ENCODE measurements at regions of chr2 and their contacts with region 1.

Region 1: GRCh38 chr2:13006829-13007717 is 290.3 kb downstream of the TRIB2 start:
- DNase-seq: peak; percentile 40 to 80 (median 56)
- ATAC-seq: peak; percentile 59
- H3K4me3 ChIP-seq: no peak overlapping the region
- H3K4me3 Mint-ChIP-seq: no peak overlapping the region
- H3K27ac ChIP-seq: no peak overlapping the region
- H3K27ac Mint-ChIP-seq: no peak overlapping the region
- H3K4me1 ChIP-seq: no peaks in the 10 kb centered on the region
- H3K4me1 Mint-ChIP-seq: peaks cover 5% of the 10 kb centered on the region
- H3K27me3 ChIP-seq: peaks cover 0 to 4% of the 10 kb centered on the region in 2 experiments
- H3K27me3 Mint-ChIP-seq: peaks cover 6% of the 10 kb centered on the region
- CTCF ChIP-seq: peak; percentile 96

Region 2: DNA sequence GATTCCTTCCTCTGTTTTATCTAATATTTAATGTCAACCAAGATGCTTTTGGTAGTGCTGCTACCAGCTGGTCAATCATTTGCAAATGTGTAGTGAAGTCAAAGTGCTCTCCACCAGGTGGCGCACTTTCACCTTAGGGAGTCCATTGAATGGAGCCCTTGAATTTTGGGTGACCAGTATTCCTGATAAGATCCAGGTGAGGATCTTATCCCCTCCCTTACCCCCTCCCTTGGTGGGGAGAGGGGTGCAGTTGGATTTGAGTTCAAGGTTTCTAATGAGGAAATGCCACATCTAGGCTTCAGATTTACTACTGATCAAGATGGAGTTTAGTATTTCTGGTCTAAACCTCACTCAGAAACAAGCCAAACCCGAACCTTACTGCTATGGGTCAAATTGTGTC is 1529.1 kb before region 1 on chr2:
- CTCF ChIA-PET with region 1: no interaction called
- POLR2A ChIA-PET with region 1: no interaction called
- intact Hi-C with region 1: loop called (anchors 1 to 2 kb)
- DNase-seq: peak; percentile 67 to 87 (median 75)
- ATAC-seq: peak; percentile 59
- H3K4me3 ChIP-seq: no peak overlapping the region
- H3K4me3 Mint-ChIP-seq: no peak overlapping the region
- H3K27ac ChIP-seq: no peak overlapping the region
- H3K27ac Mint-ChIP-seq: no peak overlapping the region
- H3K4me1 ChIP-seq: peaks cover 9% of the 10 kb centered on the region
- H3K4me1 Mint-ChIP-seq: peaks cover under 1% of the 10 kb centered on the region
- H3K27me3 ChIP-seq: peaks cover 22 to 28% of the 10 kb centered on the region in 2 experiments
- H3K27me3 Mint-ChIP-seq: peaks cover 28% of the 10 kb centered on the region
- CTCF ChIP-seq: peak; percentile 97

Region 3: DNA sequence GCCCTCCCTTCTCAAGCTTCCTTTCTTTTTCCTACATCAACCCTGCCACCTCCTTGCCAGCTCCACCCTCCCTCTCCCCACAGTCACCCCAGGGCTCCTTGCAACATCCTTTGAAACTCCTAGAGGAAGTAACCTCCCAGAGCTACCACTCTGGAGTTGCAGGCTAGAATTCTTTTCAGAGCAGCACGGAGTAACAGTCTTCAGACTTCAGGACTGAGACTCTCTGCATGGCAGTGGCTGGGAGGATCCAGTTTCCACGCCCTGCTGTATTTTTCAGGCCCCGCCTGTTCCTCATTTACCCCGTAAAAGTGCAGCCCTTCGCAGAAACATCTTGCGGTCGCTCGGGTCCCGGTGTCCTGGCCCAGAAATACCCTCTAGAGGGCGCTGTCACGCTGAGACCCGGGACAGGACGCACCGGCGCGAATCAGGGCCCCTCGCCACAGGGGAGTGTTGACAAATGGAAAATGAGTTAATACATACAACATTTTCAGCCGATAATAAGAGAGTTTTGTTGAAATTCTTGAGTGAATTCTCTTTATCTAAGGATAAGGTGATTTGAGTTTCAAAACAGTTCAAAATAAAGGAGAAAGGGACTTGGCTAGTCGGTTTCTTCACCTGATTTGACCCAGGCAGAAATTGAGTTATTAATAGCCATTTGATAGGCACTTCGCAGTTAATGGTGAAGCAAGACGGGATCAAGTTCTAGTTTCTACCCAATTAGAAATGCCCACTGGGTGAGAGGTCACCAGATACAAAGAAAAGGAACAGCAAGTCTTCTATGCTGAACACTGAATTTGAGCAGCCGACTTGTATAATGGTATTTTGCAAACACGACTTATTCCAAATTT is 1318.6 kb before region 1 on chr2:
- CTCF ChIA-PET with region 1: interaction called, 6 read pairs
- POLR2A ChIA-PET with region 1: no interaction called
- intact Hi-C with region 1: loop called (anchors 2 to 5 kb)
- DNase-seq: peak; percentile 68 to 89 (median 76)
- ATAC-seq: peak; percentile 91
- H3K4me3 ChIP-seq: peak overlapping the region; percentile 1
- H3K4me3 Mint-ChIP-seq: no peak overlapping the region
- H3K27ac ChIP-seq: no peak overlapping the region
- H3K27ac Mint-ChIP-seq: no peak overlapping the region
- H3K4me1 ChIP-seq: peaks cover 10% of the 10 kb centered on the region
- H3K4me1 Mint-ChIP-seq: peaks cover 8% of the 10 kb centered on the region
- H3K27me3 ChIP-seq: no peaks in the 10 kb centered on the region
- H3K27me3 Mint-ChIP-seq: peaks cover 18% of the 10 kb centered on the region
- CTCF ChIP-seq: peak; percentile 85

Region 4: DNA sequence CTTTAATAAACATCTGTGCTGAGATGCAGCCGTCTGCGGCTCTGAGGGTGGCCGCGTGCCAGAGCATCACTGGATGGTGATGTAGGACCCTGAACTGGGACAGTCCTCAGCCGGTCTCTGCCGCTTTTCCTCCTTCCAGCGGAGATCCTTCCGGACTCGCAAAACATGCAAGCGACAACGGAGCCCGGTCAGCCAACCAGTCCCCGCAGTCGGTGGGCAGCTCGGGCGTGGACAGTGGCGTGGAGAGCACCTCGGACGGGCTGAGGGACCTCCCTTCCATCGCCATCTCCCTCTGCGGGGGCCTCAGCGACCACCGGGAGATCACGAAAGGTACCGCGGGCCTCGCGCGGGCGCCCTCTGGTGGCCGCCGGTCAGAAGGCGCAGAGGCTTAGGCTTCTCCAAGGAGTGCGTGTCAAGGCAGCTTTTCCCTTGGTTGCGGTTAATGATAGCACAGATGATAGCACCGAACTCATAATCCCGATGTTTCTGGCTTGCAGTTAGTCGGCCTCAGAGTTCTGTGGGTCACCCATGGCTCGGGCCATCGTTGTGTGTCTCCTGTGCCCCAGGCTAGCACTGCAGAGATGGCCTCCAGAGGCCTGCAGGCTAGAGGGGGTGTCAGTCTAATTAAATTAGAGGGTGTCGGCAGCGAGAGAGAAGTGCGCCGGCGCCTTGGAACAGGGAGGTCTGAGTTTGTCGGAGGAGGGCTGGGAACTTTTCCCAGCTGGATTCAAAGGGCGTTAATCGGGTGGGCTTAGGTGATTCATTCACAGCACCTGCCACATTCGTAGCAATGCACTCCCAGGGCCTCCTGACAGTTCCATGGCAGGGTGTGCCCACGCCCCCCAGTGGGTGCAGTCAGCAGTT is 1222.1 kb before region 1 on chr2:
- CTCF ChIA-PET with region 1: no interaction called
- POLR2A ChIA-PET with region 1: no interaction called
- intact Hi-C with region 1: loop called in 1 of 2 experiments (anchors 2 kb)
- DNase-seq: peak; percentile 14 to 69 (median 35)
- ATAC-seq: peak; percentile 55
- H3K4me3 ChIP-seq: no peak overlapping the region
- H3K4me3 Mint-ChIP-seq: no peak overlapping the region
- H3K27ac ChIP-seq: no peak overlapping the region
- H3K27ac Mint-ChIP-seq: no peak overlapping the region
- H3K4me1 ChIP-seq: peaks cover 2% of the 10 kb centered on the region
- H3K4me1 Mint-ChIP-seq: no peaks in the 10 kb centered on the region
- H3K27me3 ChIP-seq: no peaks in the 10 kb centered on the region
- H3K27me3 Mint-ChIP-seq: no peaks in the 10 kb centered on the region
- CTCF ChIP-seq: peak; percentile 94

Region 5: DNA sequence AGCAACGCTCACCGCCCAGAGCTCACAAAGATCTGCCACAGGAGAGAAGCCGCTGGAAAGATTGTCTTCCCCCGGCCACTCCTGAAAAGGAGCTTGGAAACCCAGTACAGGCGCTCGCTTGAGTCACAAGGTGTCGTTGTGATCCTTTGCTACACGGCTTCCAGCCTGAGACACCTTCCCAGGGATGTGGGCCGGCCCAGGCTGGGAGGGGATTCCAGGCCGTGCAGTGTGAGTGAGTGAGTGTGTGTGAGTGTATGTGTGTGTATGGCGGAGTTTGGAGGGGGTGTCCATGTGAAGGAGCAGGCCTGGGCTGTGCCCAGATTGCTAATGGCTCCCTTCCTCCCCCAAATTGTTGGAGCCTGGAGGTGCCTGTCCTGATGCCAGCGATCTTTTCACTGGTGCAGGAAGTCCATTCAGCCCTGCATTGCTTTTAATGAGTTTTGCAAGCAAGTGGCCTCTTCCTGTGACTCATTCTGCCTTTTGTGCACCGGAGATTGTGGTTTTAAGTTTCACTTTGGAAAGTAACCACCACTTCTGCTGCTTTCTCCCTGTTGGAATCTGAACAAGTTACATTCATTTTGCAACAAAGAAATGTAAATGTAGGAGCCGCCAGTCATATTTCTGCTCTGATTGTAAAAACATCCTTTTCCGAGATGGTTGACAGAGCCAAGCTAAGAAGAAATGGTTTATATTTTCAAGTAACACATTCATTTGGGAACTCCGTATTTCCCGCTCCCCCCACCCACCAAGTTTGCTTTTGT is 1176.9 kb before region 1 on chr2:
- CTCF ChIA-PET with region 1: interaction called, 7 read pairs
- POLR2A ChIA-PET with region 1: interaction called, 3 read pairs
- intact Hi-C with region 1: loop called (anchors 1 kb)
- DNase-seq: peak; percentile 4 to 85 (median 32)
- ATAC-seq: peak; percentile 77
- H3K4me3 ChIP-seq: peak overlapping the region; percentile 42
- H3K4me3 Mint-ChIP-seq: peak overlapping the region; percentile 82
- H3K27ac ChIP-seq: peak overlapping the region in 1 of 2 donors; percentile 6
- H3K27ac Mint-ChIP-seq: peak overlapping the region; percentile 34
- H3K4me1 ChIP-seq: peaks cover 20% of the 10 kb centered on the region
- H3K4me1 Mint-ChIP-seq: peaks cover 37% of the 10 kb centered on the region
- H3K27me3 ChIP-seq: no peaks in the 10 kb centered on the region
- H3K27me3 Mint-ChIP-seq: no peaks in the 10 kb centered on the region
- CTCF ChIP-seq: no peak

Region 6: GRCh38 chr2:11863513-11864328 is 1143.4 kb before region 1 on chr2:
- CTCF ChIA-PET with region 1: interaction called, 6 read pairs
- POLR2A ChIA-PET with region 1: no interaction called
- intact Hi-C with region 1: loop called (anchors 1 kb)
- DNase-seq: peak; percentile 50 to 86 (median 58)
- ATAC-seq: peak; percentile 83
- H3K4me3 ChIP-seq: peak overlapping the region; percentile 24
- H3K4me3 Mint-ChIP-seq: peak overlapping the region; percentile 18
- H3K27ac ChIP-seq: no peak overlapping the region
- H3K27ac Mint-ChIP-seq: no peak overlapping the region
- H3K4me1 ChIP-seq: peaks cover 15% of the 10 kb centered on the region
- H3K4me1 Mint-ChIP-seq: peaks cover 18% of the 10 kb centered on the region
- H3K27me3 ChIP-seq: no peaks in the 10 kb centered on the region
- H3K27me3 Mint-ChIP-seq: no peaks in the 10 kb centered on the region
- CTCF ChIP-seq: peak; percentile 97

Region 7: GRCh38 chr2:12416600-12416999 is 590.5 kb before region 1 on chr2:
- CTCF ChIA-PET with region 1: no interaction called
- POLR2A ChIA-PET with region 1: no interaction called
- intact Hi-C with region 1: loop called (anchors 5 kb)
- DNase-seq: peak; percentile 40 to 86 (median 65)
- ATAC-seq: peak; percentile 78
- H3K4me3 ChIP-seq: no peak overlapping the region
- H3K4me3 Mint-ChIP-seq: peak overlapping the region; percentile 5
- H3K27ac ChIP-seq: no peak overlapping the region
- H3K27ac Mint-ChIP-seq: peak overlapping the region; percentile 50
- H3K4me1 ChIP-seq: peaks cover 27% of the 10 kb centered on the region
- H3K4me1 Mint-ChIP-seq: peaks cover 64% of the 10 kb centered on the region
- H3K27me3 ChIP-seq: no peaks in the 10 kb centered on the region
- H3K27me3 Mint-ChIP-seq: no peaks in the 10 kb centered on the region
- CTCF ChIP-seq: peak; percentile 79

Region 8: DNA sequence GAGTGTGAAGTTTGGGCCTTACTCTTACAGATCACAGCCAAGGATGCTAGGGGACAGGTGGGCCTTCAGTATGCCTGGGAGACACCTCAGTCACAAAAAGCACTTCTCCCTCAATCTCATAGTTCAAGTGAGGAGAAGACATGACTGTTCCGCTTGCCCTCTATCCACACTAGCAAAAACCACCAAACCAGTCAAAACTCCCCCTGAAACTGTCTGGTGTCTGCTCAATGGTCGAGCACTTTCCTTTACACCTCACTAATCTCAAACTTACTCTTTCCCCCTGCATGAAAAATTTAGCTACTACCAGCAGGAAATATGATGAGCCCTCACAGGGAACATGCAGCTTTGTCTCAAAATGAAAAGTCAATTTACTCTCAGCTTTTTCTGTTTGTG is 58.1 kb before region 1 on chr2:
- CTCF ChIA-PET with region 1: no interaction called
- POLR2A ChIA-PET with region 1: no interaction called
- intact Hi-C with region 1: no loop called
- DNase-seq: no peak
- ATAC-seq: no peak
- H3K4me3 ChIP-seq: no peak overlapping the region
- H3K4me3 Mint-ChIP-seq: no peak overlapping the region
- H3K27ac ChIP-seq: no peak overlapping the region
- H3K27ac Mint-ChIP-seq: no peak overlapping the region
- H3K4me1 ChIP-seq: no peaks in the 10 kb centered on the region
- H3K4me1 Mint-ChIP-seq: peaks cover 7% of the 10 kb centered on the region
- H3K27me3 ChIP-seq: no peaks in the 10 kb centered on the region
- H3K27me3 Mint-ChIP-seq: peaks cover 17% of the 10 kb centered on the region
- CTCF ChIP-seq: no peak